ENCODE measurements at regions of chr16 and their contacts with region 1.

Region 1: GRCh38 chr16:24516900-24517669 is 22.3 kb upstream of the RBBP6 start:
- H3K4me3 Mint-ChIP-seq: peak overlapping the region; percentile 53
- H3K27ac Mint-ChIP-seq: no peak overlapping the region
- H3K4me1 Mint-ChIP-seq: peaks cover 5% of the 10 kb centered on the region
- H3K27me3 Mint-ChIP-seq: peaks cover 14% of the 10 kb centered on the region

Region 2: DNA sequence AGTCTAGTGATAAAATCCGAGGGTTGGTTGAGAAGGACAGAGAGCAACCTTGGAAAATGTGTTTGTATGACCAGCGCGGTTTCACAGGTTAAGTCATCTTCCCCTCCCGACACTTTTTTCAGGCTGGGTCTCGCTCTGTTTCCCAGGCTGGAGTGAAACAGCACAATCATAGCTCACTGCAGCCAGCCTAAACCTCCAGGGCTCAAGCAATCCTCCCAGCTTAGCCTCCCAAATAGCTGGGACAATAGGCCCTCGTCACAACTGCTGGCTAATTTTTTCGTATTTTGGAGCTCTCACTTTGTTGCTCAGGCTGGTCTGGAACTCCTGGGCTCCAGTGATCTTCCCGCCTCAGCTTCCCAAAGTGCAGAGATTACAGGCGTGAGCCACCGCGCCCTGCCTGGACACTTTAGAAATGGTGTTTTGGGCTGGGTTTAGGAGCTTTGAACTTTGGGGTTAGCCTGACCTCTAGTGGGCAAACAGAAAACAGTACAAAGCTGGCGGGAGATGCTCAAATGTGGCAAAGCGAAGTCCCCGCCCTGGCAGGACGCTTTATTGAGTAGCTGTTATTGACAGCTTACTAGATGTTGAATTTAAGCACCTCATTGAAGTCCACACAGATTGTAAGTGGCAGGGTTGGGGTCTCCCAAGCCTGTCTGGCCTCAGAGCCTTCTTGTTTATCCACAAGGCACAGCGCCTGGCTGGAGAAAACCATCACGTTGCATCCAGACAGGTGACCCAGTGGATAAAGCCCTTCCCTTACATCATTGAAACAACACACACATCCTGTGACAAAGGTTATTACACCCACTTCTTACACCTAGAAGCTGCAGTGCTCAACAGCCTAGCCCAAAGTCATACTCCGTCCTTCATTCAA is 12.4 kb before region 1 on chr16:
- intact Hi-C with region 1: no loop called
- H3K4me3 Mint-ChIP-seq: no peak overlapping the region
- H3K27ac Mint-ChIP-seq: no peak overlapping the region
- H3K4me1 Mint-ChIP-seq: peaks cover 8% of the 10 kb centered on the region
- H3K27me3 Mint-ChIP-seq: peaks cover 14% of the 10 kb centered on the region

Region 3: DNA sequence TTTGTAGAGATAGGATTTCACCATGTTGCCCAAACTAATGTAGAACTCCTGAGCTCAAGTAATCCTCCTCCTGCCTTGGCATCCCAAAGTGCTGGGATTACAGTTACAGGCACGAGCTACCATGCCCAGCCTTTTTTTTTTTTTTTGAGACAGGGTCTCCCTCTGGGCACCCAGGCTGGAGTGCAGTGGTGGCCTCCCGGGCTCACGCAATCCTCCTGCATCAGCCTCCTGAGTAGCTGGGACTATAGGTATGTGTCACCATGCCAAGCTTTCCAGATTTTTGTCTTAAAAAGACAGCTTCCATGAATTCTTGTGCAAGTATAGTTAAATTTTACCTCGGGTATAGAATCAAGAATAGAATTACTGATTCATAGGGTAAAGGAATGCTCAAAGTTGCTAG is 11.8 kb after region 1 on chr16:
- intact Hi-C with region 1: no loop called
- H3K4me3 Mint-ChIP-seq: no peak overlapping the region
- H3K27ac Mint-ChIP-seq: no peak overlapping the region
- H3K4me1 Mint-ChIP-seq: peaks cover 29% of the 10 kb centered on the region
- H3K27me3 Mint-ChIP-seq: peaks cover 10% of the 10 kb centered on the region

Region 4: GRCh38 chr16:24539850-24540601 is 22.9 kb after region 1 on chr16:
- intact Hi-C with region 1: loop called (anchors 2 kb)
- H3K4me3 Mint-ChIP-seq: peak overlapping the region; percentile 100
- H3K27ac Mint-ChIP-seq: peak overlapping the region; percentile 100
- H3K4me1 Mint-ChIP-seq: peaks cover 27% of the 10 kb centered on the region
- H3K27me3 Mint-ChIP-seq: no peaks in the 10 kb centered on the region

Region 5: DNA sequence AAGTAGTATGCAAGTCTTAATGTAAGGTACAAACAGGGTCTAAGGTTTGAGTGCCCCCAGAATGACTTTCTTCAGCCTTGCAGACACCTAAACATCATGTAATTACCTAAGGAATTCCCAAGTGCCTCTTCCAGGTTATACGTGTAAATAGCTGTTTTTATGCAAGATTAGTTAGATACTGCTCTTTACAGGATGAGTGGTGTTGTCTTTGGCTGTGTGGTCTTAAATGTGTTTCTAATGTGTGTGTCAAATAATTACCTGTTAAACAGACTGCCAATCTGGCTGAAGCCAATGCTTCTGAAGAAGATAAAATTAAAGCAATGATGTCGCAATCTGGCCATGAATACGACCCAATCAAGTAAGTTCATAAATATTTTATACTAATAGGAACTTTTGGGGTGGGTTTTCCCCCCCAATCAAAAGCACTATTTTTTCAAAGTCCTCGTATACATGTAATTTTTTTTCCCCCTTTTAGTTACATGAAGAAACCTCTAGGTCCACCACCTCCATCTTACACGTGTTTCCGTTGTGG is 38.3 kb after region 1 on chr16:
- intact Hi-C with region 1: loop called (anchors 5 kb)
- H3K4me3 Mint-ChIP-seq: no peak overlapping the region
- H3K27ac Mint-ChIP-seq: no peak overlapping the region
- H3K4me1 Mint-ChIP-seq: no peaks in the 10 kb centered on the region
- H3K27me3 Mint-ChIP-seq: no peaks in the 10 kb centered on the region

Region 6: DNA sequence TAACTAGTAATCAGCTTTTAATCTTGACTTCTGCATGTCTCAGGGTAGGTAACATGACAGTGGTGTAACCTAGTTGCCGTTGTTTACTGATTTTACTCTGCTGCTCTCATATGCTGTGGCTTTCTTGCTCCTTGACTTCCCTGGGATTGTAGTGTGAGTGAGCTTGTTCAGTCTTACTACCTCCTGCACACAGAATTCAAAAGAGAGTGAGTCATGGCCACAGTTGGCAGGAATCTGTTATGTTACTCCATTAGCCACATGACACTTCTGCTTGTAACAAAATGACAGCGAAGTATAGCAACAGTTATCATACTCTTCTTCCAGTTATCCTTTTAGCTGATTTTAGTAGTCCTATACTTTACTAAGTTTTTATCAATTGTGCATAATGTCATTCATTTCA is 231.2 kb after region 1 on chr16:
- intact Hi-C with region 1: loop called (anchors 10 kb)
- H3K4me3 Mint-ChIP-seq: no peak overlapping the region
- H3K27ac Mint-ChIP-seq: no peak overlapping the region
- H3K4me1 Mint-ChIP-seq: peaks cover 65% of the 10 kb centered on the region
- H3K27me3 Mint-ChIP-seq: no peaks in the 10 kb centered on the region